ENCODE measurements at regions of chr14 and their contacts with region 1.

Region 1: GRCh38 chr14:68248481-68249255 is 429.1 kb downstream of the RAD51B start:
- DNase-seq: peak; percentile 63
- ATAC-seq: peak; percentile 88
- H3K4me3 ChIP-seq: no peak overlapping the region
- H3K27ac ChIP-seq: peak overlapping the region; percentile 53
- H3K4me1 ChIP-seq: peaks cover 73% of the 10 kb centered on the region
- H3K27me3 ChIP-seq: no peaks in the 10 kb centered on the region
- CTCF ChIP-seq: peak; percentile 62

Region 2: DNA sequence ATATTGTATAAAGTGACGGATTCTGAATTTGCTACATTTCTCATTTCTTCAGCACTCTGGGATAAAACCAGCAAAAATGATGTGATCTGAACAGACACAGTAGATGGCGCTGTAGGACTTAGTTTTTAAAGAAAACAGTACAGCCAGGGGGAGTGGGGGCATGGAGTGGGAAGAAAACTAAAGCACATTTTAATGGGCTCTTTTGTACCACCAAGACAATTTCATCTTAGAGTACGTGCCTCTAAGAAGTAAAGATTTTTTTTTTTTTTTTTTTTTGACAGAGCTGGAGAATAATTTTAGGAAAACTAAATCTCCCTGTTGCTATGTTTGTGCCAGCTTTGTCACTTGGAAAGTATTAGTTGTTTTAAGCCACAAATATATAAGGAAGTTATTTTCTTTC is 304.7 kb before region 1 on chr14:
- intact Hi-C with region 1: loop called (anchors 10 kb)
- DNase-seq: no peak
- ATAC-seq: peak; percentile 93
- H3K4me3 ChIP-seq: no peak overlapping the region
- H3K27ac ChIP-seq: peak overlapping the region; percentile 8
- H3K4me1 ChIP-seq: peaks cover 47% of the 10 kb centered on the region
- H3K27me3 ChIP-seq: no peaks in the 10 kb centered on the region
- CTCF ChIP-seq: peak; percentile 72

Region 3: DNA sequence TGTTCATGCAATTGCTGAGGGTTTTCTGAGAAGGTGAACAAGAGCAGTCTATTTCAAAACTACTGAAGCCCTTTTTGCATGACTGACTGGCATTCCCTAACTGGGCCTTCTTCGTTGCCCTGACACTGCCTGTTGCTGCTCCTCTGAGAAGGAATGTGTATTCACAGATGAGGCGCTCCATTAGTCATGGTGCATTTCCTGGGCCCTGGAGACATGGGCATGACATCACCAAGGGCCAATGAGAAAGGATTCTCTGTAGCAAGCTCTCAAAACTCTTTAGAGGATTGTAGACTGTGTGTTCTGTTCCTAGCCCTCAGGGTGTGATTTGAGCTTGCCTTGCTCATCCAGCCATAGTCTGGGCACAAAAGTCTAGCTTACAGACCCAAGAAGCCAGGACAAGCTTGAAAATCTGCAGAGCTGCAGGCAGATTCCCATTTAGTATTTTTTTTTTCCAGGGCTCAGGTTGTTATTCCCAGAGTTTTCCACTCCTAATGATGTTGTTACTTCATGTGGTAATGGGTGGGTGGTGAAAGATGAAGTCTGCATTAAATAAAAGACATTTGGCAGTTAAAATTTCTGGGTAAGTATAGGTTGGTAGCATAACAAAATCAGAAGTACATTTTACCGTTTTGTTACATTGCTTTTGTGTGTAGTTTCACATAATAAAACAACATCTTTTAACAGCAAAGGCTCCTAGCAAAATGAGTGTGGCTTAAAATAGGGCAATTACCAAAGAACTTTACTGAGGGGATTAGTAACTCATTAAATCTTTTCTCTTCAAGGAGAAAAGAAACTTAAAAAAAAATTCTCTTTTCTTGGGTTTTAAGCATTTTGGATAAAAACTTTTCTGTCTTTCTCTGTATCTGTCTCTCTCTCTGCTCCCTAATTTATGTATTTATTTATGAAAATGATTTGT is 110.7 kb before region 1 on chr14:
- intact Hi-C with region 1: no loop called
- DNase-seq: no peak
- ATAC-seq: peak; percentile 79
- H3K4me3 ChIP-seq: no peak overlapping the region
- H3K27ac ChIP-seq: no peak overlapping the region
- H3K4me1 ChIP-seq: peaks cover 20% of the 10 kb centered on the region
- H3K27me3 ChIP-seq: no peaks in the 10 kb centered on the region
- CTCF ChIP-seq: no peak

Region 4: GRCh38 chr14:68788996-68789820 is 540.5 kb after region 1 on chr14:
- intact Hi-C with region 1: loop called (anchors 10 kb)
- DNase-seq: peak; percentile 92
- ATAC-seq: peak; percentile 62
- H3K4me3 ChIP-seq: peak overlapping the region; percentile 97
- H3K27ac ChIP-seq: peak overlapping the region; percentile 100
- H3K4me1 ChIP-seq: peaks cover 28% of the 10 kb centered on the region
- H3K27me3 ChIP-seq: no peaks in the 10 kb centered on the region
- CTCF ChIP-seq: peak; percentile 75

Region 5: GRCh38 chr14:68816262-68816942 is 567.7 kb after region 1 on chr14:
- intact Hi-C with region 1: loop called (anchors 10 kb)
- DNase-seq: peak; percentile 96
- ATAC-seq: peak; percentile 96
- H3K4me3 ChIP-seq: peak overlapping the region; percentile 64
- H3K27ac ChIP-seq: peak overlapping the region; percentile 100
- H3K4me1 ChIP-seq: peaks cover 46% of the 10 kb centered on the region
- H3K27me3 ChIP-seq: no peaks in the 10 kb centered on the region
- CTCF ChIP-seq: peak; percentile 94

Measured in upper lobe of right lung (tissue), 1 donor.